Natural killer cell (primary cell): ENCODE measurements at regions of chr1 and their contacts with region 1.

Region 1: DNA sequence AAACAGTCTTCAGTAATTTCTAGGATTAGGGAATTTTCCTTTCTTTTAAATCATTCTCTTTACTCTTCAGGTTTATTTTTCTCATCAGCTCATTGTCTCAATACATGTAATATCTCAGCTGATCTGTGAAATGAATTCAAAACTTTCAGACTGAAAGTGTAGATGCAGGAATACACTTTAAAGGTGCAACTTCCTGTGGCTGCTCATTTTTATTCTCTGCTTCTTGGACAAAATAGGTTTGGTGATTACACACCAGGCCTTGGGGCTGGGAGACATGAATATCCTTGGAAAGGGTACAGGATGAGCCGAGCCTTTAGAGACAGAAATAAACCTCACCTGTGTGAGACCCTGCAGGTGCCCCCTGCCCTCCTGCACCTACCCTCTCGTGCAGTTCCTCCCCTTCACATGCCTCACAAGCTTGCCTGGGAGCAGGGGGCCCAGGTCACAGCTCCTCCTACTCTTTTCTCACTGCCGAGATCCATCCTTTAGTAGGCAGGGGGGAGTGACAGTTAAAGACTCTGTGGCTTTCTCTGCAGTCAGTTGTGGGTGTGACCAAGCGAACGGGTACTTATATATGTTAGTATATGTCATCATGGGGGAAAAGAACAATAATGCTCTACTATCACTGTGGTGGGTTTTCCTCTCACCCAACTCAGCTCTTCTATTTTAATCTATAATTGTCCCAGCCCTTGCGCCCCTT is 23.6 kb downstream of the XCL2 start:
- DNase-seq: peak; percentile 58 to 77
- ATAC-seq: peak; percentile 90 to 96 (median 95)
- H3K4me3 ChIP-seq: peak overlapping the region; percentile 18
- H3K4me3 Mint-ChIP-seq: peak overlapping the region; percentile 86
- H3K27ac ChIP-seq: peak overlapping the region; percentile 89
- H3K27ac Mint-ChIP-seq: peak overlapping the region; percentile 92 to 98
- H3K4me1 ChIP-seq: peaks cover 34% of the 10 kb centered on the region
- H3K4me1 Mint-ChIP-seq: peaks cover 64 to 66% of the 10 kb centered on the region in 2 donors
- H3K27me3 ChIP-seq: no peaks in the 10 kb centered on the region
- H3K27me3 Mint-ChIP-seq: no peaks in the 10 kb centered on the region
- CTCF ChIP-seq: no peak

Region 2: DNA sequence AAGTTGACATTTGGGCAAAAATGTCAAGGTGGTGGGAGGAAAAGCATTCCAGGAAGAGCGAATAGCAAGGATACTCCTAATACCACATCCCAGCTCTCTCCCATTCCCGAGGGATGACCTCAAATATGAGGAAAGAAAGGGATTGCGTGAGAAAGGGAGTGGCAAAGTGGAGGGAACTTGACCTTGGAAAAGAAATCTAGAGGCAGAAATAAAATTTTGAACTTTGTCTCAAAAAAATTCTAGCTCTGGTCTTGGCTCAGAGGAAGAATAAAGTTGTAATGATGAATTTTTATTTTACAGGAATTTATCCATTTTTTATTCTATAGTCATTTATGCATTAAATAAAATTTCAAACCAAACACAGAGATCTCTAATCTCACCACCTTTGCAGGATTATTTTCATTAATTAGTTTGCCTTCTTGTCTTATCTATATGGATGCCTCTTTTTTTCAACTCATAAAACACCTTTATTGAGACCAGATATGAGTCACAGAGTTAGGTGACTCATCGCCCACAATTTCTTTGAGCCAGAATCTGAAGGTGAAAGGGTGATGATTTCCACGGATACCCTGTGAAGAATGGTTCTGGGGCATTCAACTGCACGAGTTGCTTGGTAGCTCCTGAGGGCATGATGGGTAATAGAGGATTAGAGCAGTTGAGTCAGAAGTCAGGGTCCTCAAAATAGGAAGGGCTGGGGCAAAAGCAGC is 111.5 kb before region 1 on chr1:
- intact Hi-C with region 1: loop called (anchors 2 kb)
- DNase-seq: peak in 1 of 2 donors; percentile 74
- ATAC-seq: peak; percentile 63 to 76 (median 71)
- H3K4me3 ChIP-seq: no peak overlapping the region
- H3K4me3 Mint-ChIP-seq: peak overlapping the region; percentile 72
- H3K27ac ChIP-seq: peak overlapping the region; percentile 11
- H3K27ac Mint-ChIP-seq: peak overlapping the region; percentile 72 to 87
- H3K4me1 ChIP-seq: peaks cover 30% of the 10 kb centered on the region
- H3K4me1 Mint-ChIP-seq: peaks cover 42 to 50% of the 10 kb centered on the region in 2 donors
- H3K27me3 ChIP-seq: no peaks in the 10 kb centered on the region
- H3K27me3 Mint-ChIP-seq: no peaks in the 10 kb centered on the region
- CTCF ChIP-seq: no peak

Region 3: GRCh38 chr1:168466092-168466713 is 54.0 kb before region 1 on chr1:
- intact Hi-C with region 1: loop called (anchors 2 kb)
- DNase-seq: peak in 1 of 2 donors; percentile 53
- ATAC-seq: peak; percentile 50 to 61 (median 58)
- H3K4me3 ChIP-seq: no peak overlapping the region
- H3K4me3 Mint-ChIP-seq: peak overlapping the region; percentile 84
- H3K27ac ChIP-seq: peak overlapping the region; percentile 52
- H3K27ac Mint-ChIP-seq: peak overlapping the region; percentile 74 to 90
- H3K4me1 ChIP-seq: peaks cover 29% of the 10 kb centered on the region
- H3K4me1 Mint-ChIP-seq: peaks cover 74 to 86% of the 10 kb centered on the region in 2 donors
- H3K27me3 ChIP-seq: no peaks in the 10 kb centered on the region
- H3K27me3 Mint-ChIP-seq: no peaks in the 10 kb centered on the region
- CTCF ChIP-seq: no peak

Region 4: DNA sequence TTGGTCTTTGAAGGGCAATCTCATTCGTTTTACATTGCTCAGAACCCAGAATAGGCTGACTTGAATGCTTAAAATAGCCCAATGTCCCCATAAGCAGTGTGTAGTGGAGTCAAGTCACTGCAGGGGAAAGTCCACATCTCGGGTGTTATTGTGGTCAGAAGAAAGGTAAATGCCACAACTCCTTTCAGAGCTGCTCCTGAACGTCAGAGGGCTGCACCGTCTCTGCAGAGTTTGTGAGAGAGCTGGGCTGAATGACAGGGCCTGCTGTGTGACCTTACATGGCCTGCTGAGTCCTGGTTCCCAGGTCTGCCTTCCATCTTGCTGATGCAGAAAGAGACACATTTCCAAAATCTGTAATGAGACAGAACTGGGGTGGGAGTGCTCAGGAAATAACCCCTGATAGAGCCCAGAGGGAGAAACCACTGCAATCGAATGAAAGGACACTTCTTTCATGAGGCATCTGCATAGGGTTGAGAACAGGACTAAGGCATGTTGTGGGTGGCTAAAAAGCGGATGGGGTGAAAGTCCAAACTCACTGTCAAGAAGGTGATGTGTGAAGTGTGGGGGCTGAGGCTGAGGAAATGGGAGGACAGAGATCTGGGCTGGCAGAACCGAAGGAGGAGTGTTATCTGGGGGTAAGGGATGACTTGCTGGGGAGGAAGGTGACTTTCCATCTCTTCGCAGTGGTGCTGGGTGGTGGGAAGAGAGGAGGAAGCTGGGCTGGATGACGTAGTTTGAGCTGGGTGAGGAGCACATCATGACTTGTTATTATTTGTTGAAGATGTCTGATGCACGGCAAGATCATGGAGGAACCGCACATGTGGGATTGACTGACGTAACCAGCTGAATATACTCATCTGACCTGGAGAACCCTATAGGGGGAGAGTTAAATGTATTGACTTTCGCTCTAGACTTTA is 10.1 kb before region 1 on chr1:
- intact Hi-C with region 1: loop called (anchors 1 kb)
- DNase-seq: peak; percentile 45 to 74
- ATAC-seq: peak; percentile 69 to 83 (median 73)
- H3K4me3 ChIP-seq: no peak overlapping the region
- H3K4me3 Mint-ChIP-seq: peak overlapping the region; percentile 49
- H3K27ac ChIP-seq: peak overlapping the region; percentile 80
- H3K27ac Mint-ChIP-seq: peak overlapping the region; percentile 87 to 98
- H3K4me1 ChIP-seq: peaks cover 58% of the 10 kb centered on the region
- H3K4me1 Mint-ChIP-seq: peaks cover 76 to 84% of the 10 kb centered on the region in 2 donors
- H3K27me3 ChIP-seq: no peaks in the 10 kb centered on the region
- H3K27me3 Mint-ChIP-seq: no peaks in the 10 kb centered on the region
- CTCF ChIP-seq: no peak

Region 5: GRCh38 chr1:168535536-168535935 is 15.3 kb after region 1 on chr1:
- intact Hi-C with region 1: loop called (anchors 1 kb)
- DNase-seq: peak in 1 of 2 donors; percentile 75
- ATAC-seq: peak; percentile 87 to 97 (median 95)
- H3K4me3 ChIP-seq: peak overlapping the region; percentile 16
- H3K4me3 Mint-ChIP-seq: peak overlapping the region; percentile 91
- H3K27ac ChIP-seq: peak overlapping the region; percentile 84
- H3K27ac Mint-ChIP-seq: peak overlapping the region; percentile 88 to 91
- H3K4me1 ChIP-seq: peaks cover 25% of the 10 kb centered on the region
- H3K4me1 Mint-ChIP-seq: peaks cover 88 to 89% of the 10 kb centered on the region in 2 donors
- H3K27me3 ChIP-seq: no peaks in the 10 kb centered on the region
- H3K27me3 Mint-ChIP-seq: no peaks in the 10 kb centered on the region
- CTCF ChIP-seq: no peak

Region 6: DNA sequence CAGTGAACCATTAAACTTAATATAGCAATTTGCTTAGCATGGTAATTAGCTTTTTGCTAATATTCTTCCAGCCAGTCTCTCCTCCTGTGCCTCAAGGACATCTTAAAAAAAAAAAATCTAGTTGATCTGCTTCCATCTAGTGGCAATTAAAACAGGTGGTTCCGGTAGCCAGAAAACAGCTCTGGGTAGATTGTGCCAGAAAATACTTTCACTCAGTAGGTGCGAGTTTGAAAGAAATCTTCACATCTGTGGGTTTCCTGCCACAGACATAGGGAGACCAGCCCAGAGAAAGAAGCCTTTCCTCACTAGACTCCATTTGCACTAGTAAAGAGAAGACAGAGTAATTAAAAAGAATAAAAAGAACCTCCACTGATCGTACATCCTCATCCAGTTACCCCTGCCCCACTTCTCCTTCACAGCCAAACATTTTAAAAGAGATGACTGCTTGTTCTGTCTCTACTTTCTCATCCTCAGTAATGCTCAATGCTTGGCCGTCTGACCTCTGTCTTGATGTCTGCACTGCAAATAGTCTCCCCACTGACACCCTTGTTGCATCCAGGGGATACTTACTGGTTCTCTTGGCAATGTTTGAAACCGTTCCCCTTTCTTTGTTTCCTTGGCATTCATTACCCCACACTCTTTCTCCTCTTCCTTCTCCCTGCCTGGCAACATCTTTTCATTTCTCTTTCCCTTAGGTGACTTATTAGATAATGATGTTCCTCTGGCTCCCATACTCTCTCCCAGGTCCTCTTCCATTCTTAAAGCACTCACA is 1174.3 kb after region 1 on chr1:
- intact Hi-C with region 1: loop called (anchors 10 kb)
- DNase-seq: peak; percentile 28 to 83
- ATAC-seq: peak; percentile 60 to 80 (median 77)
- H3K4me3 ChIP-seq: no peak overlapping the region
- H3K4me3 Mint-ChIP-seq: peak overlapping the region; percentile 59
- H3K27ac ChIP-seq: peak overlapping the region; percentile 74
- H3K27ac Mint-ChIP-seq: peak overlapping the region; percentile 80 to 89
- H3K4me1 ChIP-seq: peaks cover 60% of the 10 kb centered on the region
- H3K4me1 Mint-ChIP-seq: peaks cover 82 to 88% of the 10 kb centered on the region in 2 donors
- H3K27me3 ChIP-seq: no peaks in the 10 kb centered on the region
- H3K27me3 Mint-ChIP-seq: no peaks in the 10 kb centered on the region
- CTCF ChIP-seq: peak; percentile 20